Thyroid gland (tissue), 4 donors: ENCODE measurements at regions of chr6 and their contacts with region 1.

Region 1: DNA sequence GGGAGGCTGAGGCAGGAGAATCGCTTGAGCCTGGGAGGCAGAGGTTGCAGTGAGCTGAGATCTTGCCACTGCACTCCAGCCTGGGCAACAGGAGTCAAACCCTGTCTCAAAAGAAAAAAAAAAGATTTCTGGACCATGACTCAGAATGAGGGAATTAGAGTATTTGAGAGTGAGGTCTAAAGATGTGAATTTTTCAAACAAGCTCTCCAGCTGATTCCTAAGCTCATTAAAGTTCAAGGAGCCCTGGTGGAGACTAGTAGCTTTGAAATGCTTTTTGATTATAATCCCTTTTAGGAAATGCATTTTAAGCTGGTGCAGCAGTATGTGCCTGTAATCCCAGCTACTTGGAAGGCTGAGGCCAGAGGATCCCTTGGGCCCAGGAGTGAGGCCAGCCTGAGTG is 21.8 kb upstream of the SRF start:
- DNase-seq: no peak
- H3K4me3 ChIP-seq: no peak overlapping the region
- H3K27ac ChIP-seq: no peak overlapping the region
- H3K4me1 ChIP-seq: peaks cover 0 to 9% of the 10 kb centered on the region in 2 donors
- H3K27me3 ChIP-seq: no peaks in the 10 kb centered on the region
- CTCF ChIP-seq: no peak
- POLR2A ChIP-seq: no peak

Region 2: DNA sequence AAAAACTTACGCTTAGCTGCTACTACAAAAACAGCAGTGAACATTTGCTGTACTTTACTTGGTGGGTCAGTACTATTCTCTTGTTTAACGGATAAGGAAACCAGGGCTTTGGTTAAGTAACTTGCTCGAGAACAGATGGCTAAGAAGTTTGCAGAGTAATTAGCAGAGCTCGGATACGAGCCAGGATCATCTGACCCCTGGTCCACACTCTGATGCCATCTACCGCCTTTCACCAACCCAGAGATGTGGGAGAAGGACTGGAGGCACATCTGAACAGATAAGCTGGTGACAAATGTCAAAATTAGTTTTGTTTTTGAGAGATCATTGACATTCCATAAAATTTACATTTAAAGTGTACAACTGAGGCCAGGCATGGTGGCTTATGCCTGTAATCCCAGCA is 288.8 kb before region 1 on chr6:
- intact Hi-C with region 1: no loop called
- DNase-seq: no peak
- H3K4me3 ChIP-seq: no peak overlapping the region
- H3K27ac ChIP-seq: no peak overlapping the region
- H3K4me1 ChIP-seq: no peaks in the 10 kb centered on the region
- H3K27me3 ChIP-seq: no peaks in the 10 kb centered on the region
- CTCF ChIP-seq: no peak
- POLR2A ChIP-seq: no peak

Region 3: DNA sequence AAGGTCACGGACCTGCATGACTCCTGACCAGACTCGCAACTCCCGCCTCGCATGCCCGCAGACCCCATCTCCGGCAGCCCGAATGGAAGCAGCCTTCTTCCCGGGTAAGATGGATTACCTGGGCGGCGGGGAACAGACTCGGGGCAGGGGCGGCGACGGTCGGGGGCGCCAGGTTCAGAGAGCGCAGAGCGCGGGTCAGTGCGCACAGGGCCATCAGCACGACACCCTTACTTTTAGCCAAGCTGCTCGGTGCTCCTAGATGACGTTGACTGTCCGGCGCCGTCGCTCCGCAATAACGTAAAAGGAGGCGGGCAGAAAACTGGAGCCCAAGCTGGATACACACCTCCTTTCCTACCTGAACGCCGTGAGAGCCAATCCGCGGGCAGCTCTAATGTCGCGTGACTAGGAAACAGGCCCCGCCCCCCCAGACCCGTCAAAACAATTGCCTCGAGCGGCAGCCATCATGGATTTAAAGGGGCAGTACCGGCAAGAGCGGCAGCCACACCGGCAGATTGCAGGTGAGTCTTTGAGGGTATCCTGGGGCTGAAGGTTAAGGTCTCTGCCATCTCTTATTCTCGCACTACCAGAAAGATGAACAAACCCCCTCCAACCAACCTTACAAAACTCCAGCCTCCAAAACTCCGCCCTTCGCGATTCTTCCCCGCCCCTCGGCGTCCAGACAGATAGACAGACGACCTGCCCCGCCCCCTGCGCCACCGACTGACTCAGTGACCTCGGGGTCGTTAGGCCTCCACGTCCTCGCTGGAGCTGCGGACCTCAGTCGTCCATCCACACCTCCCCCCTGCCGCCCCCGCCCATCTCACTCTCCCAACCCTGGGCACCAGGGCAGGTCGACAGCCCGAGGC is 89.9 kb before region 1 on chr6 and contains the starts of genes KLC4 and MRPL2:
- intact Hi-C with region 1: loop called (anchors 5 kb)
- DNase-seq: peak; percentile 98 to 99
- H3K4me3 ChIP-seq: peak within 1 kb of the TSS; percentile 93 to 95 (median 94)
- H3K27ac ChIP-seq: peak within 1 kb of the TSS; percentile 77 to 91 (median 87)
- H3K4me1 ChIP-seq: peaks cover 17 to 28% of the 10 kb centered on the region in 2 donors
- H3K27me3 ChIP-seq: no peaks in the 10 kb centered on the region
- CTCF ChIP-seq: no peak
- POLR2A ChIP-seq: peak in 1 of 2 donors; percentile 73
- total RNA-seq, gene KLC4: 23.4 to 41.0 (median 30.4) TPM
- total RNA-seq, gene MRPL2: 12.9 to 31.9 (median 17.7) TPM

Region 4: GRCh38 chr6:43211955-43212354 is 62.7 kb after region 1 on chr6:
- intact Hi-C with region 1: no loop called
- DNase-seq: no peak
- H3K4me3 ChIP-seq: no peak overlapping the region
- H3K27ac ChIP-seq: no peak overlapping the region
- H3K4me1 ChIP-seq: peaks cover under 1% of the 10 kb centered on the region in 2 donors
- H3K27me3 ChIP-seq: no peaks in the 10 kb centered on the region
- CTCF ChIP-seq: no peak
- POLR2A ChIP-seq: no peak